Activated CD4-positive, alpha-beta memory T cell treated with anti-CD3 and anti-CD28 coated beads, Interleukin-2, amount 10 ng/mL, durations not matched to agents 7 days and 5 days (primary cell): ENCODE measurements at regions of chr17 and their contacts with region 1.

Region 1: GRCh38 chr17:41665566-41666236 is 23.0 kb upstream of the EIF1 start:
- DNase-seq: peak; percentile 91
- H3K4me3 Mint-ChIP-seq: peak overlapping the region; percentile 75
- H3K27ac Mint-ChIP-seq: peak overlapping the region; percentile 94
- H3K4me1 Mint-ChIP-seq: peaks cover 47% of the 10 kb centered on the region
- H3K27me3 Mint-ChIP-seq: peaks cover 14% of the 10 kb centered on the region

Region 2: GRCh38 chr17:40818733-40819527 is 846.8 kb before region 1 on chr17:
- CTCF ChIA-PET with region 1: interaction called, 11 read pairs
- POLR2A ChIA-PET with region 1: interaction called, 3 read pairs
- DNase-seq: peak; percentile 87
- H3K4me3 Mint-ChIP-seq: peak overlapping the region; percentile 85
- H3K27ac Mint-ChIP-seq: peak overlapping the region; percentile 81
- H3K4me1 Mint-ChIP-seq: peaks cover 38% of the 10 kb centered on the region
- H3K27me3 Mint-ChIP-seq: peaks cover 8% of the 10 kb centered on the region

Region 3: DNA sequence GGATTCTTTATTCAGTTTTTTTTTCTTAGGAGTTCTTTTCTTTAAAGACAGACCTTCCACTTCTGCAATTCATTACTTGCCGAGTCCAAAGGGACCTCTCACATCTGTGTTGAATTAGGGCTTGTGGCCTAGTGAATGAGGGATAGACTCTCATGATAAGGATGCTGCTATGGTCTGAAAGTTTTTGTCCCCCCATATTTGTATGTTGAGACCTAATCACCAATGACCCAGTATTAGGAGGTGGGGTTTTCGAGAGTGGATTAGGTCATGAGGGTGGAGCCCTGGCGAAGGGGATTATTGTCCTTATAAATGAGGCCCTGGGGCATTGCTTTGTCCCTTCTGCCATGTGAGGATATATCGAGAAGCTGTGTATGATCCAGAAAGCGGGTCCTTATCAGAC is 808.2 kb before region 1 on chr17:
- CTCF ChIA-PET with region 1: interaction called, 18 read pairs
- POLR2A ChIA-PET with region 1: no interaction called
- DNase-seq: no peak
- H3K4me3 Mint-ChIP-seq: no peak overlapping the region
- H3K27ac Mint-ChIP-seq: no peak overlapping the region
- H3K4me1 Mint-ChIP-seq: peaks cover 2% of the 10 kb centered on the region
- H3K27me3 Mint-ChIP-seq: peaks cover 16% of the 10 kb centered on the region

Region 4: GRCh38 chr17:41579484-41580243 is 86.0 kb before region 1 on chr17:
- CTCF ChIA-PET with region 1: interaction called, 12 read pairs
- POLR2A ChIA-PET with region 1: no interaction called
- DNase-seq: peak; percentile 82
- H3K4me3 Mint-ChIP-seq: no peak overlapping the region
- H3K27ac Mint-ChIP-seq: no peak overlapping the region
- H3K4me1 Mint-ChIP-seq: no peaks in the 10 kb centered on the region
- H3K27me3 Mint-ChIP-seq: peaks cover 26% of the 10 kb centered on the region

Region 5: GRCh38 chr17:41648411-41649195 is 17.1 kb before region 1 on chr17:
- CTCF ChIA-PET with region 1: interaction called, 330 read pairs
- POLR2A ChIA-PET with region 1: interaction called, 13 read pairs
- DNase-seq: peak; percentile 85
- H3K4me3 Mint-ChIP-seq: peak overlapping the region; percentile 52
- H3K27ac Mint-ChIP-seq: peak overlapping the region; percentile 9
- H3K4me1 Mint-ChIP-seq: peaks cover 11% of the 10 kb centered on the region
- H3K27me3 Mint-ChIP-seq: peaks cover 8% of the 10 kb centered on the region

Region 6: GRCh38 chr17:41678907-41679739 is 13.4 kb after region 1 on chr17:
- CTCF ChIA-PET with region 1: interaction called, 395 read pairs
- POLR2A ChIA-PET with region 1: interaction called, 121 read pairs
- DNase-seq: peak; percentile 84
- H3K4me3 Mint-ChIP-seq: peak overlapping the region; percentile 87
- H3K27ac Mint-ChIP-seq: peak overlapping the region; percentile 95
- H3K4me1 Mint-ChIP-seq: peaks cover 65% of the 10 kb centered on the region
- H3K27me3 Mint-ChIP-seq: no peaks in the 10 kb centered on the region

Region 7: GRCh38 chr17:41695954-41696756 is 30.5 kb after region 1 on chr17:
- CTCF ChIA-PET with region 1: interaction called, 395 read pairs
- POLR2A ChIA-PET with region 1: interaction called, 220 read pairs
- DNase-seq: peak; percentile 81
- H3K4me3 Mint-ChIP-seq: no peak overlapping the region
- H3K27ac Mint-ChIP-seq: no peak overlapping the region
- H3K4me1 Mint-ChIP-seq: peaks cover 24% of the 10 kb centered on the region
- H3K27me3 Mint-ChIP-seq: no peaks in the 10 kb centered on the region